ENCODE measurements at regions of chr4 and their contacts with region 1.

Region 1: GRCh38 chr4:74157561-74158465 is at the start of gene MTHFD2L:
- DNase-seq: peak; percentile 95
- H3K4me3 Mint-ChIP-seq: peak within 1 kb of the TSS; percentile 91
- H3K27ac Mint-ChIP-seq: peak within 1 kb of the TSS; percentile 94
- H3K4me1 Mint-ChIP-seq: peaks cover 33% of the 10 kb centered on the region
- H3K27me3 Mint-ChIP-seq: no peaks in the 10 kb centered on the region
- CTCF ChIP-seq: no peak
- total RNA-seq, gene MTHFD2L: 110 and 113 TPM in 2 replicates

Region 2: GRCh38 chr4:74056858-74057562 is 100.8 kb before region 1 on chr4:
- CTCF ChIA-PET with region 1: no interaction called
- POLR2A ChIA-PET with region 1: no interaction called
- intact Hi-C with region 1: loop called (anchors 2 kb)
- DNase-seq: peak; percentile 70
- H3K4me3 Mint-ChIP-seq: no peak overlapping the region
- H3K27ac Mint-ChIP-seq: peak overlapping the region; percentile 53
- H3K4me1 Mint-ChIP-seq: peaks cover 19% of the 10 kb centered on the region
- H3K27me3 Mint-ChIP-seq: no peaks in the 10 kb centered on the region
- CTCF ChIP-seq: no peak

Region 3: GRCh38 chr4:74146581-74147129 is 11.2 kb before region 1 on chr4:
- CTCF ChIA-PET with region 1: interaction called, 6 read pairs
- POLR2A ChIA-PET with region 1: interaction called, 30 read pairs
- intact Hi-C with region 1: no loop called
- DNase-seq: no peak
- H3K4me3 Mint-ChIP-seq: no peak overlapping the region
- H3K27ac Mint-ChIP-seq: peak overlapping the region; percentile 25
- H3K4me1 Mint-ChIP-seq: peaks cover 6% of the 10 kb centered on the region
- H3K27me3 Mint-ChIP-seq: no peaks in the 10 kb centered on the region
- CTCF ChIP-seq: no peak

Region 4: DNA sequence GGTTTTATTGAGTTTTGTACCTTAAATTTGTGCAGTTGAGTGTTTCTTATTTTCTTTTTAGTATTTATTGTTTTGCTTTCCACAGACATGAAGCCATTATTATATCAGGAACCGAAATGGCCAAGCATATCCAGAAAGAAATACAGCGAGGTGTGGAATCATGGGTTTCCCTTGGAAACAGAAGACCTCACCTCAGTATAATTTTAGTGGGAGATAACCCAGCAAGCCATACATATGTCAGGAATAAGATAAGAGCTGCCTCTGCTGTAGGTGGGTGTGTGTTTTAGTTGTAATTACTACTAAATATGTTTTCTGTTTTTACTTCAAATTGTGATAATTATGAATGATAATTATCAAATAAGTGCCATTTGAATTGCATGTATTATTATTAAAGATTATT is 16.6 kb after region 1 on chr4:
- CTCF ChIA-PET with region 1: interaction called, 4 read pairs
- POLR2A ChIA-PET with region 1: interaction called, 12 read pairs
- intact Hi-C with region 1: no loop called
- DNase-seq: no peak
- H3K4me3 Mint-ChIP-seq: no peak overlapping the region
- H3K27ac Mint-ChIP-seq: no peak overlapping the region
- H3K4me1 Mint-ChIP-seq: no peaks in the 10 kb centered on the region
- H3K27me3 Mint-ChIP-seq: no peaks in the 10 kb centered on the region
- CTCF ChIP-seq: no peak

Measured in MCF 10A (cell line).